MCF 10A (cell line): ENCODE measurements at regions of chr3 and their contacts with region 1.

Region 1: DNA sequence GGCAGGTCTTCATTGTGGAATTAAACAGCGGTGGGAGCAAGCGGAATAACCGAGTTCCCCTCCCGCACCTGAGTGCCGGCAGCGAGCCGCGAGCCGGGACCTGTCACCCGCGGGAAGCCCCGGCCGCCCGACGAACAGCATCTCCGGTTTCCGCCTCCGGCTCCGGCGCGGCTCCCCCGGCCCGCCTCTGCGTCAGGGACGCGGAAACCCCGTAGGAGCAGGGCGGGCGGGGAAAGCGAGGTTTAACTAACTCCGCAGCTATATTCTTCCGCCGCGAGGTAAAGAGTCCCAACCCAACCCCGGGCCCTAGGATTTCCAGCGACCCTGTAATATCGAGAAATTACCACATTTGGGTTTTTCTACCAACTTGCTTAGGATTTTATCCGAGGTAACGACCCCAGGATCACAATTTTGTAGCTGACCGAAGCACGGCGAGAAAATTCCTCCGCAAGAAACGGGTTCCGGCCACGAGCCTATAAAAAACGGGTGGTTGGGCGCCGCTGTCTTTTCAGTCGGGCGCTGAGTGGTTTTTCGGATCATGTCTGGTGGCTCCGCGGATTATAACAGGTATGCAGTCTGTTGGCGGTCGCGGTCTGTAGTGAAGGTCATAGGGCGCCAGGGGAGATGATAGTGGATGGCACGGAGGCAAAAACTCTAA is at the start of gene EIF4A2:
- DNase-seq: peak; percentile 88
- H3K4me3 Mint-ChIP-seq: peak within 1 kb of the TSS; percentile 93
- H3K27ac Mint-ChIP-seq: peak within 1 kb of the TSS; percentile 99
- H3K4me1 Mint-ChIP-seq: peaks cover 21% of the 10 kb centered on the region
- H3K27me3 Mint-ChIP-seq: no peaks in the 10 kb centered on the region
- CTCF ChIP-seq: no peak
- total RNA-seq, gene EIF4A2: 183 and 202 TPM in 2 replicates

Region 2: GRCh38 chr3:186570096-186570940 is 212.9 kb before region 1 on chr3 and contains the start of gene DNAJB11:
- CTCF ChIA-PET with region 1: no interaction called
- POLR2A ChIA-PET with region 1: interaction called, 131 read pairs
- intact Hi-C with region 1: no loop called
- DNase-seq: peak; percentile 99
- H3K4me3 Mint-ChIP-seq: peak within 1 kb of the TSS; percentile 79
- H3K27ac Mint-ChIP-seq: peak within 1 kb of the TSS; percentile 97
- H3K4me1 Mint-ChIP-seq: peaks cover 31% of the 10 kb centered on the region
- H3K27me3 Mint-ChIP-seq: no peaks in the 10 kb centered on the region
- CTCF ChIP-seq: no peak
- total RNA-seq, gene DNAJB11: 116 and 166 TPM in 2 replicates

Region 3: DNA sequence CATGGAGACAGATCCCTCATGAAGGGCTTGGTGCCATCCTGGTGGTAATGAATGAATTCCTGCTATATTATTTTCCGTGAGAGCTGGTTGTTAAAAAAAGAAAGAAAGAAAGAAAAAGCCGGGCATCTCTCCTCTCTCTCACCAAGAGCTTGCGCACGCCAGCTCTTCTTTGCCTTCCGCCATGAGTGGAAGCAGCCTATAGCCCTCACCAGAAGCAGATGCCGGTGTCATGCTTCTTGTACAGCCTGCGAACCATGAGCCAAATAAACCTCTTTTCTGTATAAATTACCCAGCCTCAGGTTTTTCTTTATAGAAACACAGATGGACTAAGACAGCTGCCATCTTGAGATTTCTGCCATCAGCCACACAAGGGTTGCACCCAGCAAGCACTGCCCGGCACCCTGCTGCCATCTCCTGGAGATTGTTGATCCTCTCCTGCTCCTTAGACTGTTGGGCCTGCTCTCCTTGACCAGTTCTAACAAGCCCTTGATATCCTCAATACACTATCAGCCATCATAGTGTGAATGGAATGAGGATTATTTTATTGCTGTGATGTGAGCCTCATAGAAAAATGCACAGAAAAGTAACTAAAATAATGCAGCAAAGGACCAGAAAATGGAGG is 173.8 kb before region 1 on chr3:
- CTCF ChIA-PET with region 1: interaction called, 37 read pairs
- POLR2A ChIA-PET with region 1: interaction called, 182 read pairs
- intact Hi-C with region 1: no loop called
- DNase-seq: peak; percentile 74
- H3K4me3 Mint-ChIP-seq: no peak overlapping the region
- H3K27ac Mint-ChIP-seq: peak overlapping the region; percentile 27
- H3K4me1 Mint-ChIP-seq: peaks cover 7% of the 10 kb centered on the region
- H3K27me3 Mint-ChIP-seq: no peaks in the 10 kb centered on the region
- CTCF ChIP-seq: peak; percentile 57

Region 4: GRCh38 chr3:186640473-186640818 is 142.8 kb before region 1 on chr3:
- CTCF ChIA-PET with region 1: interaction called, 3 read pairs
- POLR2A ChIA-PET with region 1: interaction called, 64 read pairs
- intact Hi-C with region 1: no loop called
- DNase-seq: peak; percentile 96
- H3K4me3 Mint-ChIP-seq: peak overlapping the region; percentile 28
- H3K27ac Mint-ChIP-seq: peak overlapping the region; percentile 53
- H3K4me1 Mint-ChIP-seq: peaks cover 52% of the 10 kb centered on the region
- H3K27me3 Mint-ChIP-seq: no peaks in the 10 kb centered on the region
- CTCF ChIP-seq: no peak

Region 5: GRCh38 chr3:186754006-186754405 is 29.2 kb before region 1 on chr3:
- CTCF ChIA-PET with region 1: no interaction called
- POLR2A ChIA-PET with region 1: interaction called, 82 read pairs
- intact Hi-C with region 1: loop called (anchors 1 kb)
- DNase-seq: peak; percentile 55
- H3K4me3 Mint-ChIP-seq: peak overlapping the region; percentile 71
- H3K27ac Mint-ChIP-seq: peak overlapping the region; percentile 97
- H3K4me1 Mint-ChIP-seq: peaks cover 13% of the 10 kb centered on the region
- H3K27me3 Mint-ChIP-seq: no peaks in the 10 kb centered on the region
- CTCF ChIP-seq: no peak

Region 6: GRCh38 chr3:186798239-186798874 is 15.2 kb after region 1 on chr3:
- CTCF ChIA-PET with region 1: no interaction called
- POLR2A ChIA-PET with region 1: interaction called, 102 read pairs
- intact Hi-C with region 1: no loop called
- DNase-seq: no peak
- H3K4me3 Mint-ChIP-seq: no peak overlapping the region
- H3K27ac Mint-ChIP-seq: no peak overlapping the region
- H3K4me1 Mint-ChIP-seq: peaks cover 6% of the 10 kb centered on the region
- H3K27me3 Mint-ChIP-seq: no peaks in the 10 kb centered on the region
- CTCF ChIP-seq: no peak

Region 7: DNA sequence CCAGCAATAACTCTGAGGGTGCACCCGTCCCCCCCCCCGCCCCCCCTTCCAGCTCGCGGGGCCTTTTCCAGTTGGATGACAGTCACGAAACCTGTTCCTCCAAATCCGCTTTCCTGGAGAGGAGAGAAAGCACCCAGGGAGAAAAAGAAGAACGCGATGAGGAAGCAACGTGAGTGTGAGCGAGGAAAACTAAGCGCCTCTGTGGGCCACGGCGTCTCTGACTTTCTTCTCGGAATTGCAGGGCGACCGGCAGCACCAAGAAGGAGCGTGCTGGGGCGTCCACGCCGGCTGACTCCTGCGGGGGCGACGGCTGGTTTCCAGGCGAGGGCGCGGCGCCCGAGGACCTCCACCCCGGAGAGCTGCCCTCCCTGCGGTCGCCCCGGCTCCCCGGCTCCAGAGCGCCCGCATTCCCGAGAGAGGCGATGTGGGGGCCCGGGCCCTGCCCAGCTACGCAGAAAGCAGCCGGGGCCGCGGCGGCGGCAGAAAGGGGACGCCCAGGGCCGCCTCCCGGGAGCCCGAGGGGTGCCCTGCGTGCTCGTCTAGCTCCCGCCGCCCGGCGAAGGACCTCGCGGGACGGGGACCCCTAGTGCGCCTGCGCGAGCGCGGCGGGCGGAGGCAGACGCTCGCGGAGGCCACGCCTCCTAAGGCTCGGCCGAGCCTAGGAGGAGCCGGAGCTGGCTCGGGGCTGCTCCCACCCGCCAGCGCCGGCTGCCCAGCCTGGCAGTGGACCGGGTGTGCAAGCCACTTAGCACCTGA is 44.0 kb after region 1 on chr3:
- CTCF ChIA-PET with region 1: interaction called, 9 read pairs
- POLR2A ChIA-PET with region 1: interaction called, 14 read pairs
- intact Hi-C with region 1: no loop called
- DNase-seq: peak; percentile 88
- H3K4me3 Mint-ChIP-seq: peak overlapping the region; percentile 73
- H3K27ac Mint-ChIP-seq: no peak overlapping the region
- H3K4me1 Mint-ChIP-seq: peaks cover 12% of the 10 kb centered on the region
- H3K27me3 Mint-ChIP-seq: peaks cover 43% of the 10 kb centered on the region
- CTCF ChIP-seq: no peak